ENCODE measurements at regions of chr10 and their contacts with region 1.

Region 1: DNA sequence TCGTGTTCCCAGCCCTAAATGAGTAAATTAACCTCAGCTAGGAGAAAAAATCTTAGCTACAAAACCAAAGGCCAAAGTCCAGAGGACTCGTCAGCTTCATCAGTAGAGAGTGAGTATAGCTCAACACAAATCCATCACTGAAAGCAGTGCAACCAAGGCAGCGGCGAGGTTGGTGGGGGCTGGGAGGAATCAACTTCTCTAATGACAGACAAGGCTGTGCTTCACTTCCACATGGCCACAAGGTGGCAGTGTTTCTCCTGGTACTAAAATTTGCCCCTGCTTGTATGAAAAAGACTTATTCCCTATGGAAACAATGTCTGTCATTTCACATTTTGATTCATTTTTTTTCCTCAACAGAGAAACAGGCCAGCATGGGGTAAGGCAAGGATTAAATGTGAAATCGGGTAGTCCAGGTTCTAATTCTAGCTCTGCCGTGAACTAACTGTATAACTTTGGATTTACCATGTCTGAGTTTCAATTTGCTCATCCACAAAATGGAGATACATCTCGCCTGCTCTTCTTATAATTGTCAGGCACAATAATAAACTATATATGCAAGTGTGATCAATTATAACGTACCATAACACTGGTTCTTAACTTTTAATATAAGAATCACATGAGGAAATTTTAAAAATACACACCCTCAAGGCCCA is 39.3 kb downstream of the FAS start:
- DNase-seq: peak; percentile 85
- ATAC-seq: peak; percentile 64
- H3K4me3 Mint-ChIP-seq: no peak overlapping the region
- H3K27ac Mint-ChIP-seq: no peak overlapping the region
- H3K4me1 Mint-ChIP-seq: peaks cover 32% of the 10 kb centered on the region
- H3K27me3 Mint-ChIP-seq: no peaks in the 10 kb centered on the region

Region 2: GRCh38 chr10:88983206-88983605 is 46.7 kb before region 1 on chr10:
- CTCF ChIA-PET with region 1: no interaction called
- POLR2A ChIA-PET with region 1: no interaction called
- intact Hi-C with region 1: no loop called
- DNase-seq: no peak
- ATAC-seq: no peak
- H3K4me3 Mint-ChIP-seq: no peak overlapping the region
- H3K27ac Mint-ChIP-seq: no peak overlapping the region
- H3K4me1 Mint-ChIP-seq: peaks cover 34% of the 10 kb centered on the region
- H3K27me3 Mint-ChIP-seq: no peaks in the 10 kb centered on the region

Region 3: DNA sequence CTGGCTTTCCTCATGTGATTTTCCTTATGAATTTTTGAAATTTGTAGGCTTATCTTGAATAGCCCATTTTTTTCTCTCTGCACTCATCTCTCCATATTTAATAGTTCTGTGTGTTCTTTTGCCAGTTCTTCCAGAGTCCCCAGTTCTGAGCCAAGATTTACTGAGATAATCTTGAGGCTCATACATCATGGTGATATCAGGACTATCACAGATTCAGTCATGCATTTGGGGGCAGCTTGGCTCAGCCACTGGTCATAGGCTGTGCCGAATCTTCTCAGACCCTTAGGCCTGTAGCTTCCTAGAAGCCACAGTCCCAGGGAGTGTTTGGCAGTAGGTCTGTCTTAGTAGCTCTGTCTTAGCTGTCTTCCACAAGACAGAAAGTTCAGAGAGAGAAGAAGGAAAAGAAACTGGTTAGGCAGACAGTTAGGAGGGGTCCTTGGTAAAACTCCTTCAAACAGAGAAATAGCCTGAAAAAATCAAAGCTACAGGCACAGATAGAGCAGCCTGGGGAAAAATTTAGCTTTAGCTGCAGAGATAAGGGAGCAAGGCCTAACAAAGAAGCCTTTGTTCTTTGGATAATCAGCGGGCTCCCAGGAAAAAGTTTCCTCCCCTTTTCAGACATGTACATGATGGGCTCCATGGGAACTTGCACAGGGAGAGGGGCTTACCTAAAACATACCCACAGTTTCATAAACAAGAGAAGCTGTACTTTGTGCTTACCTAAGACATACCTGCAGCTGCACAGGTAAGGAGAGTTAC is 10.2 kb before region 1 on chr10:
- CTCF ChIA-PET with region 1: interaction called, 17 read pairs
- POLR2A ChIA-PET with region 1: no interaction called
- intact Hi-C with region 1: no loop called
- DNase-seq: no peak
- ATAC-seq: no peak
- H3K4me3 Mint-ChIP-seq: no peak overlapping the region
- H3K27ac Mint-ChIP-seq: no peak overlapping the region
- H3K4me1 Mint-ChIP-seq: peaks cover 12% of the 10 kb centered on the region
- H3K27me3 Mint-ChIP-seq: no peaks in the 10 kb centered on the region

Region 4: GRCh38 chr10:89079961-89080360 is 50.0 kb after region 1 on chr10:
- CTCF ChIA-PET with region 1: no interaction called
- POLR2A ChIA-PET with region 1: no interaction called
- intact Hi-C with region 1: loop called (anchors 1 to 5 kb)
- DNase-seq: no peak
- ATAC-seq: no peak
- H3K4me3 Mint-ChIP-seq: no peak overlapping the region
- H3K27ac Mint-ChIP-seq: no peak overlapping the region
- H3K4me1 Mint-ChIP-seq: peaks cover 21% of the 10 kb centered on the region
- H3K27me3 Mint-ChIP-seq: peaks cover 2% of the 10 kb centered on the region

Region 5: GRCh38 chr10:89115876-89116627 is 86.1 kb after region 1 on chr10:
- CTCF ChIA-PET with region 1: interaction called, 4 read pairs
- POLR2A ChIA-PET with region 1: no interaction called
- intact Hi-C with region 1: loop called in 1 of 2 experiments (anchors 2 kb)
- DNase-seq: no peak
- ATAC-seq: no peak
- H3K4me3 Mint-ChIP-seq: no peak overlapping the region
- H3K27ac Mint-ChIP-seq: no peak overlapping the region
- H3K4me1 Mint-ChIP-seq: no peaks in the 10 kb centered on the region
- H3K27me3 Mint-ChIP-seq: peaks cover 11% of the 10 kb centered on the region

Region 6: DNA sequence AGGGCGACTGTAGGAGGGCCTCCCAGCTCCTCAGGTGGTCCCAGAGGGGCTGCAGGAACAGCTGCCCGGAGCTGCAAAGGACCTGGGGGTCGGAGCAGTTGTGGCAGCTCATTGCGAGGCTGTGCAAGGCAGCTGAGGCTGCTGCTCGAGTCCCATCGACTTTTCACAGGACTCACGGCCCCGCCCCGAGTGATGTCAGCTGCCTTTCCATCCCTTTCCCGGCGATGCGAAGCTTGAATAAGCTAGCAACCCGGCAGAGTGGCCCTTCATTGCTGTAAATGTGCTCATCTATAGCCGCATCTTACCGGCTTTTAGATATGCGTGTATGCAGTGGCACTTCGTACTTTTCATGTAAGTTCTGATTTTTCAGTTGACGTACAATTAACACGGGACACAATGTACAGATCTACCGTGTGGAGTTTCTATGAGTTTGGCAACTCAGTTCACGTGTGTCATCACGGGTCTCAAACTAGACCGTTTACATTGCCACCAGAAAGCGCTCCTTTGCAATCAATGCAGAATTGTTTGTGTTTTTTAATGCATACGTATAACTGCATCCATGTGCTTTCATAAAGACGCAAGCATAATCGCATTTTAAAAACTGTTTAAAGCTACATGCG is 177.4 kb after region 1 on chr10 and contains the start of gene CH25H:
- CTCF ChIA-PET with region 1: interaction called, 78 read pairs
- POLR2A ChIA-PET with region 1: no interaction called
- intact Hi-C with region 1: no loop called
- DNase-seq: peak; percentile 76
- ATAC-seq: peak; percentile 76
- H3K4me3 Mint-ChIP-seq: peak within 1 kb of the TSS; percentile 69
- H3K27ac Mint-ChIP-seq: no peak within 1 kb of the TSS
- H3K4me1 Mint-ChIP-seq: peaks cover 10% of the 10 kb centered on the region
- H3K27me3 Mint-ChIP-seq: peaks cover 35% of the 10 kb centered on the region
- total RNA-seq, gene CH25H: not detected

Region 7: DNA sequence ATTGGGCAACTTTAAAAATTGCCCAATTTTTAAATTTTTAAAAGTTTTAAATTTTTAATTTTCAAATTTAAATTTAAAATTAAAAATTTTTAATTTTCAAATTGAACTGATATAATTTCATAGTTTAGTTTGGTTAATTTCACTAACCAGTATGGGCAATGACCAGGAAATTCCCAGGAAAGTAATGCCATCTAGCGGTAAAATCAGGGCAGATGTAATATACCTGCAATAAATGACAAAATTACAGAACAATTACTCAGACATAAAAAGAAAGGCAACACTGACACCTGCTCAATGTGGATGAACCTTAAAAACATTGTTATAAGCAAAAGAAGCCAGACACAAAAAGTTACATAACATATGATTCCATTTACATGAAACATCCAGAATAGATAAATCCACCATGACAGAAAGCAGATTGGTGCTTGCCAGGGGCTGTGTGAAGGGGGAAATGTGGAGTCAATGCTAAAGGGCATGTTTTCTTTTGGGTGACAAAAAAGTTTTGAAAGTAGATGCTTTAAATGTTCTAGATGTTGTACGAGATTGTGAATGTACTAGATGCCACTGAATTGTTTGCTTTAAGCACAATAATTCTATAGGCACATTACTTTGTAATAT is 534.1 kb after region 1 on chr10:
- CTCF ChIA-PET with region 1: interaction called, 5 read pairs
- POLR2A ChIA-PET with region 1: no interaction called
- intact Hi-C with region 1: loop called in 1 of 2 experiments (anchors 10 kb)
- DNase-seq: no peak
- ATAC-seq: peak; percentile 73
- H3K4me3 Mint-ChIP-seq: no peak overlapping the region
- H3K27ac Mint-ChIP-seq: no peak overlapping the region
- H3K4me1 Mint-ChIP-seq: no peaks in the 10 kb centered on the region
- H3K27me3 Mint-ChIP-seq: peaks cover 6% of the 10 kb centered on the region